GM12878 (cell line): ENCODE measurements at regions of chr15 and their contacts with region 1.

Region 1: DNA sequence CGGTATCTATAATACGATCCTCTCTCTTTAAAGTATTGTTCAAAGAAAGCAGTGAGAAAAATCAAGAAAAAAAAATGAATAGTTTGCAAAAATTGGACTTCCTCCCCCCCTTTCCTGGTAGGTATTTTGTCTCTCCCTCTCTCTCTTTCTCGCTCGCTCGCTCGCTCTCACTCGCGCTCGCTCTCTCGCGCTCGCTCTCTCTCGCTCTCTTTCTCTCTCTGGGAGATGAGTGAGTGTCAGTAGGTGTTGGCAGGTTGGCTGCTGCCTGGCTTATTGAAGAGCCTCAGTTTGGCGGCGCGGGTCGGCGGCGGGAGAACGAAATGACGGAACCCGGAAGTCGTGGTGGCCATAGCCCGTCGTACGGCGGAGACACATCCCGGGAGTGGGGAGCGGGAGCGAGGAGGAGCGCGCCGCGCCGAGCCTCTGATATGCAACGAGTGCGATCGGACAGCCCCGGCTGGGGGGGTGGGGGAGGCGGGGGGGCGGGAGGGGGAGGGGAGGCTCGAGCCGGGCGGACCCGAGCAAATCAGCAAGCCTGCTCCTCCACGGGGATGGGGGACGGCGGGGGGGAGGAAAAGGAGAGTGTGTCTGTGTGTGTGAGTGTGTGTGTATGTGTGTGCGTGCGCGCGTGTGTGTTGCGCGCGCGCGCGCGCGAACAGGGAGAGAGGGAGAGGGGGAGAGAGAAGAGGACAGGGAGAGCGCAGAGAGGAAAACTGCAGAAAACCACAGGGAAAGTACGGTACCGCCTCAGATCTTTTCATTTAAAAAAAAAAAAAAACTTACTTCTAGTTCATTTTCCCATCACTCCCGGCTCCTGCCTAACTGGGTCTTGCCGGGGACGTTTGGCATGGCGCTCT is at the start of gene MEIS2:
- DNase-seq: peak; percentile 37
- ATAC-seq: peak; percentile 53
- H3K4me3 ChIP-seq: peak within 1 kb of the TSS; percentile 87
- H3K27ac ChIP-seq: peak within 1 kb of the TSS; percentile 88
- H3K4me1 ChIP-seq: peaks cover 7% of the 10 kb centered on the region
- H3K27me3 ChIP-seq: peaks cover 0 to 8% of the 10 kb centered on the region in 2 experiments; a peak in 2 of 4 replicates
- CTCF ChIP-seq: no peak
- EP300 ChIP-seq: no peak
- POLR2A ChIP-seq: peak; percentile 88
- RAD21 ChIP-seq: no peak
- polyA plus RNA-seq, gene MEIS2: 9.2 to 9.4 TPM

Region 2: GRCh38 chr15:35519541-35520149 is 1580.7 kb before region 1 on chr15:
- CTCF ChIA-PET with region 1: no interaction called
- POLR2A ChIA-PET with region 1: no interaction called
- RAD21 ChIA-PET with region 1: no interaction called
- SMC1A ChIA-PET with region 1: no interaction called
- in situ Hi-C with region 1: loop called (anchors 10 kb)
- intact Hi-C with region 1: loop called (anchors 10 kb)
- DNase-seq: peak; percentile 19
- ATAC-seq: peak; percentile 79
- H3K4me3 ChIP-seq: no peak overlapping the region
- H3K27ac ChIP-seq: no peak overlapping the region
- H3K4me1 ChIP-seq: no peaks in the 10 kb centered on the region
- H3K27me3 ChIP-seq: no peaks in the 10 kb centered on the region
- CTCF ChIP-seq: peak; percentile 41 to 71 (median 62); a peak in 5 of 6 replicates
- EP300 ChIP-seq: no peak
- POLR2A ChIP-seq: no peak
- RAD21 ChIP-seq: peak; percentile 88

Region 3: DNA sequence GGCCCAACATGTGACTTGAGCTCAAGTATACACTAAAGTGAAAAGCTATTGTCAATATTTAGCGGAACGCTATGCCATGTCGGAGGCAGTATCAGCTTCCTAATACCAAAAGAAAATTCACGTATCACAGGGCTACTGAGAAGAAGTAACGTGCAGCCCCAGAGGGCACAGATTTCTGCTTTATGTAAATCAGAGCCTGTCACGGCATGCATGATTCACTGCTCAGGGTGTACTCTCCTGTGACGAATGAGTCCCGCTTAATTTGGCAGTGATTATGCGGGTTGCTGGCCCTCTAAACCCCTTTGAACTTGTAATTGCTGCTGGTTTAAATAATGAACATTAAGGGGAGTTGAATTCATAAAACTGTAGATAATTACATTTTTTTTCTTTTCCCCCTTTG is 85.3 kb before region 1 on chr15:
- CTCF ChIA-PET with region 1: interaction called, 5 read pairs
- POLR2A ChIA-PET with region 1: interaction called, 3 read pairs
- RAD21 ChIA-PET with region 1: interaction called, 5 read pairs
- SMC1A ChIA-PET with region 1: interaction called, 4 read pairs
- in situ Hi-C with region 1: no loop called
- intact Hi-C with region 1: loop called (anchors 2 kb)
- DNase-seq: no peak
- ATAC-seq: peak; percentile 84
- H3K4me3 ChIP-seq: no peak overlapping the region
- H3K27ac ChIP-seq: no peak overlapping the region
- H3K4me1 ChIP-seq: peaks cover 17% of the 10 kb centered on the region
- H3K27me3 ChIP-seq: no peaks in the 10 kb centered on the region
- CTCF ChIP-seq: no peak
- EP300 ChIP-seq: peak; percentile 63 to 71; a peak in 2 of 4 replicates
- POLR2A ChIP-seq: no peak
- RAD21 ChIP-seq: no peak

Region 4: GRCh38 chr15:37034835-37035748 is 65.2 kb before region 1 on chr15:
- CTCF ChIA-PET with region 1: interaction called, 3 read pairs
- POLR2A ChIA-PET with region 1: interaction called, 3 read pairs
- RAD21 ChIA-PET with region 1: no interaction called
- SMC1A ChIA-PET with region 1: interaction called, 12 read pairs
- in situ Hi-C with region 1: no loop called
- intact Hi-C with region 1: no loop called
- DNase-seq: no peak
- ATAC-seq: peak; percentile 69
- H3K4me3 ChIP-seq: no peak overlapping the region
- H3K27ac ChIP-seq: peak overlapping the region; percentile 21
- H3K4me1 ChIP-seq: peaks cover 11% of the 10 kb centered on the region; the same call in 1 of the 2 replicates
- H3K27me3 ChIP-seq: no peaks in the 10 kb centered on the region
- CTCF ChIP-seq: no peak
- EP300 ChIP-seq: no peak
- POLR2A ChIP-seq: no peak
- RAD21 ChIP-seq: no peak

Region 5: GRCh38 chr15:37079726-37080125 is 20.6 kb before region 1 on chr15:
- CTCF ChIA-PET with region 1: no interaction called
- POLR2A ChIA-PET with region 1: interaction called, 5 read pairs
- RAD21 ChIA-PET with region 1: no interaction called
- SMC1A ChIA-PET with region 1: interaction called, 31 read pairs
- in situ Hi-C with region 1: no loop called
- intact Hi-C with region 1: no loop called
- DNase-seq: no peak
- ATAC-seq: no peak
- H3K4me3 ChIP-seq: no peak overlapping the region
- H3K27ac ChIP-seq: no peak overlapping the region
- H3K4me1 ChIP-seq: peaks cover 5% of the 10 kb centered on the region; the same call in 1 of the 2 replicates
- H3K27me3 ChIP-seq: no peaks in the 10 kb centered on the region
- CTCF ChIP-seq: no peak
- EP300 ChIP-seq: no peak
- POLR2A ChIP-seq: no peak
- RAD21 ChIP-seq: no peak

Region 6: DNA sequence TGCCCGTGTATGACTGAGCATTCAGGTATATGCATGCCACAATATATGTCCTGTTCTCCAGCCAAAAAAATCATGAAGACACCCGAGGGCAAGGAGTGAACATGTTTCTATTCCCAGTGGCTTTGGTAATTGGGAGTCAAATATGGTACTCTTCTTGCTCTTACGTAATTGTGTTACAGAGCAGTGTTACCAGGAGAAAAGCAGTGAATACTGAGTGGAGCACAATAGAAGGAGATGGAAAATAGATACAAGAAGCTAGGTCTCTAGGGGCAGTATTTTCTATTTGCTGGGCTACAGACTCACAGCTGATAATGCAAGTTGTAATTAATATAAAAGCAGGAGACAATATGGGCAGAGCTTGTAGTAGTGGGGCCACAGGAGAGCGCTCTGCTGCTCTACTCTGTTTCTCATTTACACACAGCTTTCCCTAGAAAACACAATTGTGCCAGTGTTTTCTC is 13.2 kb before region 1 on chr15:
- CTCF ChIA-PET with region 1: interaction called, 4 read pairs
- POLR2A ChIA-PET with region 1: interaction called, 13 read pairs
- RAD21 ChIA-PET with region 1: interaction called, 4 read pairs
- SMC1A ChIA-PET with region 1: interaction called, 31 read pairs
- in situ Hi-C with region 1: no loop called
- intact Hi-C with region 1: no loop called
- DNase-seq: no peak
- ATAC-seq: no peak
- H3K4me3 ChIP-seq: no peak overlapping the region
- H3K27ac ChIP-seq: no peak overlapping the region
- H3K4me1 ChIP-seq: no peaks in the 10 kb centered on the region
- H3K27me3 ChIP-seq: no peaks in the 10 kb centered on the region
- CTCF ChIP-seq: no peak
- EP300 ChIP-seq: no peak
- POLR2A ChIP-seq: no peak
- RAD21 ChIP-seq: no peak

Region 7: DNA sequence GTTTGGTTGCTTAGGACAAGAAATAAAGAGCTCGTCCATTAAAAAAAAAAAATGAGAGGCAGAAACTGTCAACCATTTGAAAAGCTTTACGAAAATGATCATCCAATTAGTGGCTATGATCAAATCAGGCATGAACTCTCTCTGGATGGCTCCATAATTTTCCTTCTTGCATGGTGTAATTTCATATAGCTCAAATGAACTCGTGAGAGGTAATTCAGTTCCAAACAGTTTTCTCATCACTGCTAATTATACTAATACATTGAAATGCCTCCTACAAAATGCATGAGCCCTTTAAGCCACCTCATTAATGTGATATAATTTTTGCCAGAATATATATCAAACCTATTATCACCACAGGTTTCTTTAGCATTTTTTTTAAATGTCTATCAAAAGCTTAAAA is 239.5 kb after region 1 on chr15:
- CTCF ChIA-PET with region 1: no interaction called
- POLR2A ChIA-PET with region 1: no interaction called
- RAD21 ChIA-PET with region 1: no interaction called
- SMC1A ChIA-PET with region 1: no interaction called
- in situ Hi-C with region 1: no loop called
- intact Hi-C with region 1: no loop called
- DNase-seq: no peak
- ATAC-seq: no peak
- H3K4me3 ChIP-seq: no peak overlapping the region
- H3K27ac ChIP-seq: no peak overlapping the region
- H3K4me1 ChIP-seq: no peaks in the 10 kb centered on the region
- H3K27me3 ChIP-seq: no peaks in the 10 kb centered on the region
- CTCF ChIP-seq: no peak
- EP300 ChIP-seq: no peak
- POLR2A ChIP-seq: no peak
- RAD21 ChIP-seq: no peak